ENCODE measurements at regions of chr1 and their contacts with region 1.

Region 1: DNA sequence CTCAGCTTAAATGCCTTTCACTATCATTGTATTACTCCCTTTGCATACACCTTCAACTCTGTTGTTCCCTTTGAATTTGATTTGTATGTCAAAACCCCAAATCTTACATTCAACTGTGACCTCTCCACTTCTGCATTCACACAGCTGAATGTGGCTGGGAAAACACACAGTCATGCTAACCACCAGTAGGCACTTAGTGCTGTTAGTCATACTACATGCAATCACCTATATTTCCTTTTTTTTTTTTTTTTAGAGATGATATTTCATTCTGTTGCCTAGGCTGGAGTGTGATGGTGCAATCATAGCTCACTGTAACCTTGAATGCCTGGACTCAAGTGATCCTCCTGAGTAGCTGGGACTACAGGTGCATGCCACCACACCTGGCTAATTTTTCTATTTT is 16.2 kb downstream of the BTBD8 start:
- DNase-seq: no peak
- H3K4me3 ChIP-seq: no peak overlapping the region
- CTCF ChIP-seq: no peak
- POLR2A ChIP-seq: no peak

Region 2: GRCh38 chr1:91021686-91022517 is 1074.4 kb before region 1 on chr1 and contains the start of gene ZNF644:
- intact Hi-C with region 1: no loop called
- DNase-seq: peak; percentile 90 to 97
- H3K4me3 ChIP-seq: peak within 1 kb of the TSS; percentile 70
- CTCF ChIP-seq: no peak
- POLR2A ChIP-seq: peak in 1 of 2 donors; percentile 32
- total RNA-seq, gene ZNF644: 28.0 to 57.1 (median 39.4) TPM

Region 3: GRCh38 chr1:92016720-92017316 is 79.5 kb before region 1 on chr1:
- intact Hi-C with region 1: no loop called
- DNase-seq: no peak
- H3K4me3 ChIP-seq: no peak overlapping the region
- CTCF ChIP-seq: no peak
- POLR2A ChIP-seq: no peak

Region 4: DNA sequence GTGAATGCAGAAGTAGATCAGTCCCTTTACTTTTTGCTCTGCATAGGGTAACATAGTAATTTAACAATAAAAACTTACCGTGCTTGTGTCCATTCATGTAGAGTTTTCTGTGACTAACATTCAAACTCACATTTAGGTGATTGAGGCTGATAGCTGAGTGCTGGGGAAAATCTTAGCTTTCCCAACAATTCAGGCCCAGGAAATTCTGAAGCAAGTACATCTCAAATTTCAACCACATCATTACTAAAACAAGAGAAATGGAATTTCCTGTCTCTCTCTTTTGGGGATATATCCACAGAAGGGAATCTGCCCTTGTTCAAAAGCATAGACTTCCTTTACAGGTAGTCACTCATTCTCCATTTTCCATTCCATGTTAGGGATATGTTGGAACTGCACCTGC is 88.3 kb after region 1 on chr1:
- intact Hi-C with region 1: loop called (anchors 5 kb)
- DNase-seq: no peak
- H3K4me3 ChIP-seq: no peak overlapping the region
- CTCF ChIP-seq: no peak
- POLR2A ChIP-seq: no peak

Region 5: GRCh38 chr1:92277105-92277723 is 180.9 kb after region 1 on chr1:
- intact Hi-C with region 1: no loop called
- DNase-seq: no peak
- H3K4me3 ChIP-seq: no peak overlapping the region
- CTCF ChIP-seq: no peak
- POLR2A ChIP-seq: no peak